Dorsolateral prefrontal cortex (tissue), 120 donors: ENCODE measurements at regions of chr22 and their contacts with region 1.

Region 1: GRCh38 chr22:20486229-20486628 is 9.4 kb downstream of the KLHL22 start:
- DNase-seq: no peak
- H3K4me3 ChIP-seq: no peak overlapping the region
- H3K27ac ChIP-seq: no peak overlapping the region
- H3K27me3 ChIP-seq: no peaks in the 10 kb centered on the region
- CTCF ChIP-seq: no peak

Region 2: GRCh38 chr22:20441631-20442484 is 44.4 kb before region 1 on chr22:
- intact Hi-C with region 1: loop called in 1 of 2 experiments (anchors 5 kb)
- DNase-seq: peak in 1 of 10 donors; percentile 37
- H3K4me3 ChIP-seq: no peak overlapping the region
- H3K27ac ChIP-seq: peak overlapping the region in 2 of 59 donors; percentile 3 to 21
- H3K27me3 ChIP-seq: peaks cover 0 to 16% (median 5%) of the 10 kb centered on the region in 45 donors
- CTCF ChIP-seq: no peak

Region 3: DNA sequence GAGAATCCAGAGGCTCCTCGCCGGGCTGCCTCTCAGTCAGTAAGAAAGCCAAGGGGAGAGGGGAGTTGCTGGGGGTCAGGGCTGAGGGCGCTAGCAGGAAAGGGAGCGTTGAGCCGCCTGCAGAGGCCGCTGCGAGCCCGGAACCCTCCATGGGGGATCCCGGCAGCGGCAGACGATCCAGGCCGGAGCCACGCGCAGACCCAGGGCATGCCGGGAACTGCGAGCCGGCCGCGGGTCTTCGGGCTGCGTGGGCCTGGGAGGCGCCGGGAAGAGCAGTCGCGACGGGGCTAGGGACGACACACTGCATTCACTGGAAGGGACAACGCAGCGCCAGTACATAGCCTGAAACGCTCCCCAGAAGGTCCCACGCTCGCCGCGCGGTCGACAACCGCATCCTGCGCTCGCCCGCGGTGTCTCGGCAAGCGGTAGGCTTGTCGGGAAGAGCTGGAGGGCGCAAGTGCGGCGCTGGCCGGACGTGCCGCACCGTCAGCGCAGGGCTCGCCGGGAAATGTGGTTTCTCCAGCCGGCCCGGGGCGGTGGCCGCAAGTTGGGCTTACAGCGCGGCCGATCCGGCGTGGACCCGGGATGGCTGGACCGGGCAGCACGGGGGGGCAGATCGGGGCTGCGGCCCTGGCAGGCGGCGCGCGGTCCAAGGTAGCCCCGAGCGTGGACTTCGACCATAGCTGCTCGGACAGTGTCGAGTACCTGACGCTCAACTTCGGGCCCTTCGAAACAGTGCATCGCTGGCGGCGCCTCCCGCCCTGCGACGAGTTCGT is 495.7 kb after region 1 on chr22 and contains the start of gene LZTR1:
- intact Hi-C with region 1: no loop called
- DNase-seq: peak; percentile 75 to 93 (median 85)
- H3K4me3 ChIP-seq: peak within 1 kb of the TSS; percentile 69 to 99 (median 90)
- H3K27ac ChIP-seq: peak within 1 kb of the TSS; percentile 76 to 99 (median 96)
- H3K27me3 ChIP-seq: no peaks in the 10 kb centered on the region
- CTCF ChIP-seq: peak; percentile 31 to 84 (median 63)
- total RNA-seq, gene LZTR1: 48.3 to 115 (median 73.6) TPM